HCT116 (cell line): ENCODE measurements at regions of chr7 and their contacts with region 1.

Region 1: DNA sequence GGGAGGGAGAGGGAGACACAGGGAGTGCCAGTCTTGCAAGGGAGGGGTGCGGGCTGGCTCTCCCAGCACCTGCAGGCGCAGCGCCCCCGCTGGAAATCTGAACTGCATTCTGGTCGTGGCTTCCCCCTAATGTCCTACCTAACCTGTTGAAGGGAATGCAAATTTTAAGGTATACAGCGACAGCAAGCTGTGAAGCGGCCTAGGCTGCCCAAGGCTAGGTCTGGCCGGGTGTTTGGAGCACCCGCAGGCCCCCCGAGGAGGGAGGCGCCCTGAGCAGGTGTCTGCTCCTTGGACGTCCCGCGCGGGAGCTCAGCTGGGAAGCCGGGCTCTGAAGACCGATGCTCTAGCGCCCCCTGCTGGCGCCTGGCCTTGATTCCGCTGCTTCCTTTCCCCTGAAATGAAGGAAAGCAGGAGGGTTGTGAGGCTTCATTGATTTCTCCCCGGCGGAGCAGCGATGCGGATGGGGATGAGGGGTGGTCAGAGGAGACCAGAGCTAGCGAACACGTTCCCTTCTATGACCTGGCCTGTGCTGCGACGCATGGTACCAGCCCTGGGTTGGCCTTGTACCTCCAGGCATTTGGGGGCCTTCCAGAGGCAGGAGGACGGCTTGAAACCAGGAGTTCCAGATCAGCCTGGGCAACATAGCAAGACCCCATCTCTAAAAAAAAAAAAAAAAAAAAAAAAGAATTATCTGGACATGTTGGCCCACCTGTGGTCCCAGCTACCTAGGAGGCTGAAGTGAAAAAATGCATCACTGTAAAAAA is 601.3 kb downstream of the GALNT17 start:
- DNase-seq: peak; percentile 3
- ATAC-seq: peak; percentile 40; the same call in 1 of the 2 replicates
- H3K4me3 ChIP-seq: no peak overlapping the region
- H3K27ac ChIP-seq: no peak overlapping the region
- H3K4me1 ChIP-seq: no peaks in the 10 kb centered on the region
- H3K27me3 ChIP-seq: no peaks in the 10 kb centered on the region
- CTCF ChIP-seq: peak in 2 of 3 experiments; percentile 56; a peak in 4 of 6 replicates
- POLR2A ChIP-seq: no peak
- RAD21 ChIP-seq: peak; percentile 35

Region 2: DNA sequence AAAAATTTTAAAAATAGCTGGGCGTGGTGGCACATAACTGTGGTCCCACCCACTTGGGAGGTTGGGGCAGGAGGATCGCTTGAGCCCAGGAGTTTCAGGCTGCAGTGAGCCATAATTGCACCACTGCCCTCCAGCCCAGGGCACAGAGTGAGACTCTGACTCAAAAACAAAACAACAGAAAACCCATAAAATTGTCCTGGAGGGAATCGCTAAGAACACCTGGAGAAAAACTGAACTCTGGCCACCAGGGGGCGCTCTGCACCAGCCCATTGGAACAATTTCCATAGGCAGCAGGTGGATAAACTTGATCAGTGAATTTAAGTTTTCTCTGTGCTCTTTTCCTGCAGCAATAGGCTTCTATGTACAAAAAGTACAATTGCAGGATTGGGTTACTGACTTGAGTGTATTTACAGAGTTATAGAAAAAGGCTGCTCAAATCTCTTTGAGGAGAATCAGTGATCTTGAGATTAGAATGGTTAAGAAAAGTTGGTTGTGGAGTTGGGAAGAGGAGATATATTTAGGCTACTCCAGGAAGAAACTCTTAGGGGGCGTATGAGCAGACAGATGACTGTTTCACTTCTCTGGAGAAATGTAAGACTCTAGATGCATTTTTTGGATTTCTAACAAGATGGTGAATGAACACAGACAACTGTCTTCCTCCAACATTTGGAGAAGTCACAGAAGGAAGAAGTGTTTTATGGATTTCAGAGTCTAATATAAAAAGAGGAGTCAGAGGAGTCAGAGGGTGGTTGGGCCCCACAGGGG is 876.2 kb before region 1 on chr7:
- CTCF ChIA-PET with region 1: no interaction called
- POLR2A ChIA-PET with region 1: no interaction called
- RAD21 ChIA-PET with region 1: no interaction called
- intact Hi-C with region 1: loop called (anchors 1 kb)
- DNase-seq: peak; percentile 13
- ATAC-seq: no peak
- H3K4me3 ChIP-seq: no peak overlapping the region
- H3K27ac ChIP-seq: no peak overlapping the region
- H3K4me1 ChIP-seq: no peaks in the 10 kb centered on the region
- H3K27me3 ChIP-seq: no peaks in the 10 kb centered on the region
- CTCF ChIP-seq: peak; percentile 16 to 70 (median 62); a peak in 4 of 6 replicates
- POLR2A ChIP-seq: no peak
- RAD21 ChIP-seq: peak; percentile 51; the same call in 1 of the 2 replicates

Region 3: DNA sequence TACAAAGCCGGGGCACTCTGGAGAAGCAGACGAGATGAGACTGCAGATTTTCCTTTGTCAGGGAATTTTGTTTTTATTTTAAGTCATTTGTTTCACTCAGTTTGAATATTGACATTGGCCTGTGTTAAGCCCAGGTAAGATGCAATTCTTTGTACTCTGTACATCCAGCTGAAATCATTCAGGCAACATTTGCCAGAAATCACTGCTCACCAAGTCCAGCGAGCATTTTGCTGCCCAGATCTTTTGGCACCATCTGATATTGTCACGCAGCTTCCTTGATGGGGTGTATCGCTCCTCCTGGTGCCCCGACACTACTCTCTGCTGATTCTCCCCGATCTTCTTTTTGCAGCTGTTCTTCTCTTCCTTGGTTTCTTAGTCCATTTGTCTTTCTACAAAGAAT is 339.6 kb before region 1 on chr7:
- CTCF ChIA-PET with region 1: no interaction called
- POLR2A ChIA-PET with region 1: no interaction called
- RAD21 ChIA-PET with region 1: no interaction called
- intact Hi-C with region 1: no loop called
- DNase-seq: no peak
- ATAC-seq: no peak
- H3K4me3 ChIP-seq: no peak overlapping the region
- H3K27ac ChIP-seq: no peak overlapping the region
- H3K4me1 ChIP-seq: no peaks in the 10 kb centered on the region
- H3K27me3 ChIP-seq: no peaks in the 10 kb centered on the region
- CTCF ChIP-seq: no peak
- POLR2A ChIP-seq: no peak
- RAD21 ChIP-seq: no peak